PC-9 (cell line): ENCODE measurements at regions of chrX and their contacts with region 1.

Region 1: GRCh38 chrX:120250522-120251271 is at the start of gene ZBTB33:
- DNase-seq: peak; percentile 92 to 96
- H3K4me3 ChIP-seq: peak within 1 kb of the TSS; percentile 75
- H3K27ac ChIP-seq: peak within 1 kb of the TSS; percentile 83
- H3K4me1 ChIP-seq: peaks cover 14% of the 10 kb centered on the region
- H3K27me3 ChIP-seq: no peaks in the 10 kb centered on the region
- CTCF ChIP-seq: peak; percentile 82
- total RNA-seq, gene ZBTB33: 19.1 and 29.0 TPM in 2 replicates

Region 2: GRCh38 chrX:120308959-120309872 is 58.5 kb after region 1 on chrX:
- CTCF ChIA-PET with region 1: no interaction called
- POLR2A ChIA-PET with region 1: interaction called, 5 read pairs
- intact Hi-C with region 1: loop called (anchors 1 kb)
- DNase-seq: peak in 1 of 2 experiments; percentile 75
- H3K4me3 ChIP-seq: peak overlapping the region; percentile 60
- H3K27ac ChIP-seq: no peak overlapping the region
- H3K4me1 ChIP-seq: 0 out of 2 replicates have a peak, but pooled peaks cover 3% of the 10 kb centered on the region
- H3K27me3 ChIP-seq: no peaks in the 10 kb centered on the region
- CTCF ChIP-seq: no peak; the same call in 1 of the 2 replicates

Region 3: DNA sequence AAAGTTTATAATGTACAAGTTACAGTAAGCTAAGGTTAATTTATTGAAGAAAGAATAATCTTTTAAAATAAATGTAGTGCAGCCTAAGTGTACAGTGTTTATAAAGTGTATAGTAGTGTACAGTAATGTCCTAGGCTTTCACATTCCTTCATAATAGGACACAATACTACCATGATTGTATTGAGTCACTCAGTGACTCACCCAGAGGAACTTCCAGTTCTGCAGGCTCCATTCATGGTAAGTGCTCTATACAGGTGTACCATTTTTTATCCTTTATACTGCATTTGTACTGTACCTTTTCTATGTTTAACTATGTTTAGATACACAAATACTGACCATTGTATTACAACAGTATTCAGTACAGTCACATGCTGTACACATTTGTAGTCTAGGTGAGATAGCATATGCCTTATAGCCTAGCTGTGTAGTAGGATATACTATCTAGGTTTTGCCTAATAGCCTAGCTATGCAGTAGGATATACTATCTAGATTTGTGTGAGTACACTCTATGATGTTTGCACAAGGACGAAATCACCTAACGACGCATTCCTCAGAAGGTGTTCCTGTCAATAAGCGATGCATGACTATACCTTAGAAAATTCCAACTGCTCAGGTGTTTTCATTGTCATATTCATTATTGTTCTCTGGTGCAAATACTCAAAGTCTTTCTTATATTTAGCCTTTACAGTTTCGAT is 66.0 kb after region 1 on chrX:
- CTCF ChIA-PET with region 1: interaction called, 3 read pairs
- POLR2A ChIA-PET with region 1: no interaction called
- intact Hi-C with region 1: loop called (anchors 2 kb)
- DNase-seq: peak; percentile 60 to 97
- H3K4me3 ChIP-seq: peak overlapping the region; percentile 25; the same call in 1 of the 2 replicates
- H3K27ac ChIP-seq: peak overlapping the region; percentile 85
- H3K4me1 ChIP-seq: peaks cover 41% of the 10 kb centered on the region
- H3K27me3 ChIP-seq: no peaks in the 10 kb centered on the region
- CTCF ChIP-seq: no peak